SK-N-SH (cell line): ENCODE measurements at regions of chr17 and their contacts with region 1.

Region 1: DNA sequence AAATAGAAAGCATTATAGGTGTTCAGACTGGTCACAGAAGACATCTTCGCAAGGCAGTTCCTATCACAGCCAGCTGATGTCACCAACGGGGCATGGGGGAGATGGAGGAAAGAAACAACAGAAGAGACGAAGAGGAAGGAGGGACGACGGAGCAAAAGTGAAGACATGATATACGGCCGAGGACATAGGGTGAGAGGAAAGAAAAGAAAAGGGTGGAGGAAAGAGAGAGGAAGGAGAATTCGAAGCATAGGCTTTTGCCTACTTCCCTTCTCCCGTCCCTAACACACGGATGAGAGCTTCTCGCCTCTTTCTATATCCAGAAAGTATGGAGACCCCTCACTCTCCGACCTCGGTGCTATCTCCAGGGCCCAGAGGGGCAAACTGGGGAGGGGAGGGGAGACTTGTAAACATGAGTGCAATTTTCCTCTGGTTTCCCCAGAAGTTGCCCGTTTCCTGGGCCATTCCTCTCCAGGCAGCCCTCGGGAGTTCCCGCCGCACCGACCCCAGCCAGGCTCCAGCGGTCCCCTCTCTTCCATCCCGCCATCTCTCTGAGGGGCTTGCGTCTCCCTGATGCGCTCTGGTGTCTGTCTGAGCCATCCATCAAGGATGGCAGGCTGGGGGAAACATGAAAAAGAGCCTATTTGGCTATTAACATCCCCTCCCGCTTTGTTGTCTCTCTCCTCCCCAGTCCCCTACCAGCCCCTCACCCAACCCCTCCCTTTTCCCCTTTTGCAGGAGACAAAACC is 26.0 kb downstream of the COPZ2 start:
- DNase-seq: peak; percentile 59
- H3K4me3 ChIP-seq: peak overlapping the region; percentile 42 to 51
- H3K27ac ChIP-seq: peak overlapping the region in 1 of 2 experiments; percentile 100; a peak in 3 of 4 replicates
- H3K4me1 ChIP-seq: peaks cover 15 to 54% of the 10 kb centered on the region in 2 experiments
- H3K27me3 ChIP-seq: no peaks in the 10 kb centered on the region
- CTCF ChIP-seq: peak; percentile 57
- EP300 ChIP-seq: no peak
- RAD21 ChIP-seq: peak; percentile 68

Region 2: DNA sequence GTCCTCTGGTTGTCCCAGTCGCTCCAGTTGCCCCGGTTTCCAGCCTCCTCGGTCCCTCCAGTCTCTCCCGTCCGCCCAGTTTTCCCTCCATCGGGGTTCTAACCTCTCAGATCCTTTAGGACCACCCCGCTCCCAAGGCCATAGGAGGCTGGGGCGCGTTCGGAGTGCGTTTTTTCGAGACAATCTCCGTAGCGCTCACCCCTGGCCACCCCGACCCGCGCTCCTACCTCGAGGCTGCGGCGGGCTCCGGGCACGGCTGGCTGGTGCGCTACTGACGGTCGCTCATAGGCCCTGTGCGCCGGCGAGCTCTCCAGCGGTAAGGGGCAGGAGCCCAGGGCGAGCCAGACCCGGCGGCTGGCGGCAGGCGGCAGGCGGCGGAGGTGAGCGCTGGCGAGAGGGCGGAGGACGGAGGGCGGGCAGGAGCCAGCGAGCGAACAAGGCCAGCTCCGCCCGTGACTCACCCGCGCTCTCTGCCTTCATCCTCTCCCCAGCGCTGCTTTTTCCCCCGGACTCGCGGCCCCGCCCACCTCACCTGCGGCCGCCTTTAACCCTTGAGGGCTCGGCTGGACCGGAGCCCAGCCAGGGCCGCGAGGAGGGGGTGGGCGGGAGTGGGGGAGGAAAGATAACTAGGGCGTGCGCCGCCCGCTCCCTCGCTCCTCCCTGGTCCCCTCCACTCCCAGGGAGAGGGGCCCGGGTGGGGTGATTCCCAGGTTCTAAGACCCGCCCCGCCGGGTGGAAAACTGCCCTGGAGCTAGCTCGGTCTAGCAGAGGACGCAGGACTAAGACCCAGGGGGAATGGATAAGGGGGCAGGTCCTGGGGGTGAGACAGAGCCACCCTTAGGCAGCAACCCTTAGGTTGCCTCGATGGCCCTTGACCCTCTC is 160.6 kb before region 1 on chr17 and contains the start of gene SP6:
- CTCF ChIA-PET with region 1: interaction called, 34 read pairs
- POLR2A ChIA-PET with region 1: no interaction called
- DNase-seq: peak; percentile 89
- H3K4me3 ChIP-seq: peak within 1 kb of the TSS; percentile 11 to 34; a peak in 2 of 4 replicates
- H3K27ac ChIP-seq: no peak within 1 kb of the TSS
- H3K4me1 ChIP-seq: peaks cover 0 to 13% of the 10 kb centered on the region in 2 experiments; a peak in 1 of 4 replicates
- H3K27me3 ChIP-seq: peaks cover 99% of the 10 kb centered on the region
- CTCF ChIP-seq: 0 out of 2 replicates have a peak, but pooled peaks have one; percentile 30
- EP300 ChIP-seq: no peak
- RAD21 ChIP-seq: no peak
- polyA plus RNA-seq, gene SP6: 0.03 TPM in 2 replicates

Region 3: GRCh38 chr17:47941236-47941994 is 70.2 kb before region 1 on chr17 and contains the start of gene PNPO:
- CTCF ChIA-PET with region 1: interaction called, 496 read pairs
- POLR2A ChIA-PET with region 1: no interaction called
- DNase-seq: peak; percentile 98
- H3K4me3 ChIP-seq: peak within 1 kb of the TSS; percentile 76 to 78
- H3K27ac ChIP-seq: peak within 1 kb of the TSS in 1 of 2 experiments; percentile 73; a peak in 3 of 4 replicates
- H3K4me1 ChIP-seq: peaks cover 6 to 17% of the 10 kb centered on the region in 2 experiments; a peak in 3 of 4 replicates
- H3K27me3 ChIP-seq: no peaks in the 10 kb centered on the region
- CTCF ChIP-seq: no peak; the same call in 1 of the 2 replicates
- EP300 ChIP-seq: peak in 1 of 2 experiments; percentile 54; a peak in 1 of 4 replicates
- RAD21 ChIP-seq: no peak
- polyA plus RNA-seq, gene PNPO: 26.1 and 33.8 TPM in 2 replicates

Region 4: GRCh38 chr17:47987240-47987835 is 24.2 kb before region 1 on chr17:
- CTCF ChIA-PET with region 1: interaction called, 1,752 read pairs
- POLR2A ChIA-PET with region 1: interaction called, 189 read pairs
- DNase-seq: peak; percentile 87
- H3K4me3 ChIP-seq: no peak overlapping the region
- H3K27ac ChIP-seq: peak overlapping the region in 1 of 2 experiments; percentile 92; a peak in 2 of 4 replicates
- H3K4me1 ChIP-seq: peaks cover 13 to 61% of the 10 kb centered on the region in 2 experiments
- H3K27me3 ChIP-seq: no peaks in the 10 kb centered on the region
- CTCF ChIP-seq: no peak
- EP300 ChIP-seq: peak in 1 of 2 experiments; percentile 85; a peak in 2 of 4 replicates
- RAD21 ChIP-seq: peak; percentile 48

Region 5: GRCh38 chr17:47995241-47995935 is 16.2 kb before region 1 on chr17:
- CTCF ChIA-PET with region 1: interaction called, 1,752 read pairs
- POLR2A ChIA-PET with region 1: interaction called, 223 read pairs
- DNase-seq: no peak
- H3K4me3 ChIP-seq: no peak overlapping the region
- H3K27ac ChIP-seq: peak overlapping the region in 1 of 2 experiments; percentile 94; a peak in 2 of 4 replicates
- H3K4me1 ChIP-seq: peaks cover 9 to 76% of the 10 kb centered on the region in 2 experiments; a peak in 3 of 4 replicates
- H3K27me3 ChIP-seq: no peaks in the 10 kb centered on the region
- CTCF ChIP-seq: no peak
- EP300 ChIP-seq: no peak
- RAD21 ChIP-seq: no peak